Activated T-helper 2 cell treated with anti-CD3 and anti-CD28 coated beads, Interferon-gamma antibody, Interleukin-2, Interleukin-4, amounts not matched to agents 10 μg/mL and 5 μg/mL and 100 μg/mL, durations not matched to agents 14 hours and 24 hours and 36 hours (primary cell): ENCODE measurements at regions of chrX and their contacts with region 1.

Region 1: DNA sequence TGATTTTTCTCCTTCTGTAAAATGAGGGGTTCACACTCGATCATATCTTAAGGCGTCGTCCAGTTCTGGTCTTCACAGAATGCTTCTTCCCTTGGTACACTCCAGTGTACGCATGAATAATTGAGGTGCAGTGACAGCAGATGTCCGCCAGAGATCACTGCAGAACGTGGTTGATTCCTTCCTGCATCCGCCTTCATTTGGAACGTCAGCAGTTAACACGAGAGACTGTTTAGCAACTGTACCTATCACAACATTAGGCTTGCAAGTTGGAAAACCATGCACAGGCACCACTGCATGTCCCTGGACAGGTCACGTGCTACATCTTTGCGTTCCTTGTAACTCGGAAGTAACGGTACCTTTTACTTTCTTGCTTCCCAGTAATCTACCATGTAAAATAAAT is 66.0 kb upstream of the GEMIN8 start:
- DNase-seq: peak; percentile 8
- H3K4me3 Mint-ChIP-seq: no peak overlapping the region
- H3K27ac Mint-ChIP-seq: no peak overlapping the region
- H3K4me1 Mint-ChIP-seq: no peaks in the 10 kb centered on the region
- H3K27me3 Mint-ChIP-seq: no peaks in the 10 kb centered on the region

Region 2: DNA sequence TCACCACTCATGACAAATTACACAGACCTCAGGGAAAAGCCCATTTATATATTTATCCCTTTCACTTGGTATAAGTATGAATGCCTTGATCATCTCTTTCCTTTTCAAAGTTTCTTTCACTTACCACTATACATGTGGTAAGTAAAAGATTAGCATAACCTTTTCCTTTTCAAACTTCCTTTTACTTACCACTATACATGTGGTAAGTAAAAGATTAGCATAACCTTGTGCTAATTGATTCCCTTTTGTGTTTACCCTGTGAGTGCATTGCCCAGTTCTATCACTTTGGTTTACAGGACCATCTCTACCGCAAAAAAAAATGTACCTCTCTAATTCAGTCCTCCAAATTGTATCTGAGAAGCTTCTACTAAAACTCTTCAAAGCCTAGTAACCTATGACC is 475.5 kb before region 1 on chrX:
- intact Hi-C with region 1: no loop called
- DNase-seq: no peak
- H3K4me3 Mint-ChIP-seq: no peak overlapping the region
- H3K27ac Mint-ChIP-seq: no peak overlapping the region
- H3K4me1 Mint-ChIP-seq: peaks cover 10% of the 10 kb centered on the region
- H3K27me3 Mint-ChIP-seq: no peaks in the 10 kb centered on the region

Region 3: DNA sequence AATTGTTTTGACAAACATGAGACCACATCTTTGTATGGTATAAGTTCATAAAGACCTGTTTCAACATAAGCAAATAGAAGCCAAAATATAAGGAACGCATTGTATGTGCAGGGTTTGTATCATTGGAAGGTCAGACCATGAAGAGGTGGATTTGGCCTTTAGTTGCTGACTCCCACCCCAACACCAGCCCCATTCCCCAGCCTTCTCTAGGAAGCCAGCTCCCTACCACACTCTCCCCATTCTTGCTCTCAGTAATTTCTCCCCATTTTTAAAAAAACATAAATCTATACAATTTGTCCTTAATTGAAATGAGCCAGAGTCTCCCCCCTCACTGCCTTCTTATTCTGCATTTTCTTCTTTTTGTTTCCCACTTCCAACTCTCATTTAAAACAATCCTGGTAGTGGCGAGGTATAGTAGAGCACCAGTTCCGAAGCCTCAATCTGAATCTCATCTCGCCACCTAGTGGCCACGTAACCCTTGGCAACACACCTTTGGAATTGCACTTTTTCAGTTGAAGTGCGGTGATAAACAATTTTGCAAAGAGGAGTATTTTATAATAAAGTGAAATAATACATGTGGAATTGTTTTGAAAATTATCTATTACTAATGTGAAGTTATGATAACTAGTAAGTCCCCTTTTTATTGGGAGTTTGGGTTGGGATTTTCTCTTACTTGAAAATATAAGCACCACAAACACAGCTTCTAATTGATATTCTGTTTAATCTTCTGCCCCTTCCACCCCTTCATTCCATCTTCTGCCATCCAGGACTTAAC is 1047.5 kb after region 1 on chrX:
- intact Hi-C with region 1: loop called (anchors 10 kb)
- DNase-seq: peak; percentile 9
- H3K4me3 Mint-ChIP-seq: no peak overlapping the region
- H3K27ac Mint-ChIP-seq: no peak overlapping the region
- H3K4me1 Mint-ChIP-seq: peaks cover 16% of the 10 kb centered on the region
- H3K27me3 Mint-ChIP-seq: peaks cover 7% of the 10 kb centered on the region